ENCODE measurements at regions of chr11 and their contacts with region 1.

Region 1: GRCh38 chr11:77994412-77995362 is at the start of gene INTS4:
- DNase-seq: peak; percentile 95 to 100
- ATAC-seq: peak; percentile 99
- H3K4me3 ChIP-seq: peak within 1 kb of the TSS; percentile 71
- H3K27ac ChIP-seq: peak within 1 kb of the TSS; percentile 82 to 87
- H3K4me1 ChIP-seq: peaks cover 13% of the 10 kb centered on the region
- CTCF ChIP-seq: no peak
- EP300 ChIP-seq: no peak
- POLR2A ChIP-seq: peak; percentile 75
- RAD21 ChIP-seq: no peak; a peak in 1 of 5 replicates
- polyA plus RNA-seq, gene INTS4: 35.3 and 39.4 TPM in 2 replicates

Region 2: GRCh38 chr11:77806993-77807740 is 187.5 kb before region 1 on chr11:
- CTCF ChIA-PET with region 1: no interaction called
- POLR2A ChIA-PET with region 1: no interaction called
- DNase-seq: no peak
- ATAC-seq: no peak
- H3K4me3 ChIP-seq: no peak overlapping the region
- H3K27ac ChIP-seq: no peak overlapping the region
- H3K4me1 ChIP-seq: peaks cover 18% of the 10 kb centered on the region
- CTCF ChIP-seq: no peak
- EP300 ChIP-seq: no peak
- POLR2A ChIP-seq: no peak
- RAD21 ChIP-seq: no peak

Region 3: GRCh38 chr11:77820563-77821348 is 173.9 kb before region 1 on chr11 and contains the starts of genes AAMDC and RSF1:
- CTCF ChIA-PET with region 1: interaction called, 7 read pairs
- POLR2A ChIA-PET with region 1: interaction called, 18 read pairs
- DNase-seq: peak; percentile 92 to 97
- ATAC-seq: peak; percentile 86 to 91
- H3K4me3 ChIP-seq: peak within 1 kb of the TSS; percentile 99
- H3K27ac ChIP-seq: peak within 1 kb of the TSS; percentile 97
- H3K4me1 ChIP-seq: peaks cover 28% of the 10 kb centered on the region; the same call in 2 of the 3 replicates
- CTCF ChIP-seq: peak; percentile 65
- EP300 ChIP-seq: no peak
- POLR2A ChIP-seq: peak; percentile 85
- RAD21 ChIP-seq: peak; percentile 46 to 64
- polyA plus RNA-seq, gene AAMDC: 17.7 and 25.4 TPM in 2 replicates
- polyA plus RNA-seq, gene RSF1: 29.6 TPM in 2 replicates

Region 4: GRCh38 chr11:78009062-78009461 is 14.4 kb after region 1 on chr11:
- CTCF ChIA-PET with region 1: interaction called, 6 read pairs
- POLR2A ChIA-PET with region 1: interaction called, 10 read pairs
- DNase-seq: no peak
- ATAC-seq: no peak
- H3K4me3 ChIP-seq: no peak overlapping the region
- H3K27ac ChIP-seq: no peak overlapping the region
- H3K4me1 ChIP-seq: no peaks in the 10 kb centered on the region
- CTCF ChIP-seq: no peak
- EP300 ChIP-seq: no peak
- POLR2A ChIP-seq: no peak
- RAD21 ChIP-seq: no peak

Region 5: GRCh38 chr11:78079232-78080083 is 84.8 kb after region 1 on chr11 and contains the start of gene NDUFC2:
- CTCF ChIA-PET with region 1: no interaction called
- POLR2A ChIA-PET with region 1: no interaction called
- DNase-seq: peak; percentile 76 to 88
- ATAC-seq: peak; percentile 96 to 97
- H3K4me3 ChIP-seq: peak within 1 kb of the TSS; percentile 78
- H3K27ac ChIP-seq: peak within 1 kb of the TSS; percentile 89 to 98
- H3K4me1 ChIP-seq: peaks cover 11% of the 10 kb centered on the region; the same call in 2 of the 3 replicates
- CTCF ChIP-seq: no peak
- EP300 ChIP-seq: no peak
- POLR2A ChIP-seq: peak; percentile 92
- RAD21 ChIP-seq: no peak; a peak in 1 of 5 replicates
- polyA plus RNA-seq, gene NDUFC2: 138 and 148 TPM in 2 replicates